GM12878 (cell line): ENCODE measurements at regions of chr20 and their contacts with region 1.

Region 1: GRCh38 chr20:50824193-50824632 is 29.4 kb downstream of the BCAS4 start:
- DNase-seq: no peak
- ATAC-seq: no peak
- H3K4me3 ChIP-seq: no peak overlapping the region
- H3K27ac ChIP-seq: no peak overlapping the region
- H3K4me1 ChIP-seq: peaks cover 35% of the 10 kb centered on the region
- H3K27me3 ChIP-seq: no peaks in the 10 kb centered on the region
- CTCF ChIP-seq: no peak
- EP300 ChIP-seq: no peak
- POLR2A ChIP-seq: no peak
- RAD21 ChIP-seq: no peak

Region 2: GRCh38 chr20:50379049-50379990 is 444.9 kb before region 1 on chr20:
- CTCF ChIA-PET with region 1: no interaction called
- POLR2A ChIA-PET with region 1: no interaction called
- RAD21 ChIA-PET with region 1: no interaction called
- SMC1A ChIA-PET with region 1: no interaction called
- in situ Hi-C with region 1: no loop called
- intact Hi-C with region 1: no loop called
- DNase-seq: no peak
- ATAC-seq: no peak
- H3K4me3 ChIP-seq: no peak overlapping the region
- H3K27ac ChIP-seq: no peak overlapping the region
- H3K4me1 ChIP-seq: peaks cover 10% of the 10 kb centered on the region
- H3K27me3 ChIP-seq: no peaks in the 10 kb centered on the region
- CTCF ChIP-seq: no peak
- EP300 ChIP-seq: no peak
- POLR2A ChIP-seq: no peak
- RAD21 ChIP-seq: no peak

Region 3: GRCh38 chr20:50799890-50800655 is 24.1 kb before region 1 on chr20:
- CTCF ChIA-PET with region 1: interaction called, 30 read pairs
- POLR2A ChIA-PET with region 1: interaction called, 6 read pairs
- RAD21 ChIA-PET with region 1: interaction called, 141 read pairs
- SMC1A ChIA-PET with region 1: interaction called, 119 read pairs
- in situ Hi-C with region 1: no loop called
- intact Hi-C with region 1: no loop called
- DNase-seq: no peak
- ATAC-seq: peak; percentile 64
- H3K4me3 ChIP-seq: peak overlapping the region; percentile 63
- H3K27ac ChIP-seq: peak overlapping the region; percentile 95
- H3K4me1 ChIP-seq: peaks cover 29% of the 10 kb centered on the region
- H3K27me3 ChIP-seq: no peaks in the 10 kb centered on the region
- CTCF ChIP-seq: no peak
- EP300 ChIP-seq: no peak
- POLR2A ChIP-seq: no peak
- RAD21 ChIP-seq: no peak

Region 4: DNA sequence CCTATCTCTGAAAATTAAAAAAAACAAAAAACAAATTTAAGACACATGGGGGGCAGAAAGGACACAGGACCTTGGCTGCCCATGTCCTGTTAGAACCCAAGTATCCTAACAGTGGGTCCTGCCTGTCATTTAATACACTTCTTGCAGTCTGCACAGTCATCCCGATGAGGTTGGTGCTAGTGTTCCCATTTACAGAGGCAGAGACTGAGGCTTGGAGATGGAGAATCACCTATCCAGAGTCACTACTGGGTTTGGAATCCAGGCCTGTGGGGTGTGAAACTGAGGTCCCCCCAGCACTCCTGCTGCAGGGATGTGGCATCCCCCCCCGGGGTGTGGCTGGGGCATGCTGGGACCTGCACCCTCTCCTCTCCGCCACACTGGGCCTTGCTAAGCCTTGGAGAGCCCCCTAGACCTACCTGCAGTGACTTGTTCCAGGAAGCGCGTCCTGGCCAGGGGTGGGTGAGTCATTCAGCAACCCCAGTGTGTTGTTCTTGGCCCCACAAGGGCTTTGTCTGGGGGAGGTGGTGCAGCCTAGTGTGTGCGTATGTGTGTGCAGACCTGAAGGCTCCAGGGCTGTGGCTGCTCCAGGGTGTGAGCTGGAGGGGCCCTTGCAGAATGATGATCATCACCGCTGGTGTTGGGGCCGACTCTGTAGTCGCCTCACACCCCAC is 20.4 kb after region 1 on chr20:
- CTCF ChIA-PET with region 1: interaction called, 6 read pairs
- POLR2A ChIA-PET with region 1: interaction called, 4 read pairs
- RAD21 ChIA-PET with region 1: interaction called, 10 read pairs
- SMC1A ChIA-PET with region 1: interaction called, 7 read pairs
- in situ Hi-C with region 1: no loop called
- intact Hi-C with region 1: no loop called
- DNase-seq: peak; percentile 83
- ATAC-seq: peak; percentile 96
- H3K4me3 ChIP-seq: no peak overlapping the region; the same call in 1 of the 2 replicates
- H3K27ac ChIP-seq: peak overlapping the region; percentile 96
- H3K4me1 ChIP-seq: peaks cover 50% of the 10 kb centered on the region
- H3K27me3 ChIP-seq: no peaks in the 10 kb centered on the region
- CTCF ChIP-seq: peak in 1 of 3 experiments; percentile 6; a peak in 1 of 6 replicates
- EP300 ChIP-seq: peak; percentile 76 to 83; a peak in 3 of 4 replicates
- POLR2A ChIP-seq: peak; percentile 73
- RAD21 ChIP-seq: peak; percentile 33